MCF 10A (cell line): ENCODE measurements at regions of chr11 and their contacts with region 1.

Region 1: DNA sequence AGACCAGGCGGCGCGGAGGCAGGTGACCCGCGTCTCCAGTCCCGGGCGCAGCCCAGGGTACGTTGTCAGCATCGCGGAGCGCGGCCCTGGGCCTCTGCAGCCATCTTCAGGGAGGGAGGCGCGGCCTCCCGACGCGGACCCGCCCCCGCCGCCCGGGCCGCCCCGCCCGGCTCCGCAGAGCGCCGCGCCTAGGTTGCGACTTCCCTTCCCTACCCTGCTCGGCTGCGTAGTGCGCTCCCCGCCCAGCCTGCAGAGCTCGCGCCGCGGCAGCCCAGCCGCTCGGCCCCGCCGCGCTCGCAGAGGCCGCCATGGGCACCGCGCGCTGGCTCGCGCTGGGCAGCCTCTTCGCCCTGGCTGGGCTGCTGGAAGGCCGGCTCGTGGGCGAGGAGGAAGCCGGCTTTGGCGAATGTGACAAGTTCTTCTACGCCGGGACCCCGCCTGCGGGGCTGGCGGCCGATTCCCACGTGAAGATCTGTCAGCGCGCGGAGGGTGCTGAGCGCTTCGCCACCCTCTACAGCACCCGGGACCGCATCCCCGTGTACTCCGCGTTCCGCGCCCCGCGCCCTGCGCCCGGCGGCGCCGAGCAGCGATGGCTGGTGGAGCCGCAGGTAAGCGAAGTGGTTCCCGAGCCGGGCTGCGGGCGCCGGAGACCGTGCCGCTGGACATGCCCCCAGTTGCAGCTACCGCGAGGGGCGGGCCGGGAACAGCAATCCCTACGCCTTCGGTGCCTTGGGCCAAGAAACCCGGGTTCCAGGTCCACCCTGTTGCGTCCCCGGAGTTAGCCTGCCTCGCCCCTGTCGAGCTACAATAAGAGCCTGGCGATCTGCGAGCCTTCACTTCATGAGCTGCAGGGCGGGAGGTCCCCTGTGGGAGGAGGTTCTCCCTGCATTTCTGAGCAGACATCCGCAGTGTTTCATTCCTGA is at the start of gene ENDOD1:
- DNase-seq: peak; percentile 80
- H3K4me3 Mint-ChIP-seq: peak within 1 kb of the TSS; percentile 85
- H3K27ac Mint-ChIP-seq: peak within 1 kb of the TSS; percentile 64
- H3K4me1 Mint-ChIP-seq: peaks cover 36% of the 10 kb centered on the region
- H3K27me3 Mint-ChIP-seq: no peaks in the 10 kb centered on the region
- CTCF ChIP-seq: no peak
- total RNA-seq, gene ENDOD1: 10.8 and 11.4 TPM in 2 replicates

Region 2: DNA sequence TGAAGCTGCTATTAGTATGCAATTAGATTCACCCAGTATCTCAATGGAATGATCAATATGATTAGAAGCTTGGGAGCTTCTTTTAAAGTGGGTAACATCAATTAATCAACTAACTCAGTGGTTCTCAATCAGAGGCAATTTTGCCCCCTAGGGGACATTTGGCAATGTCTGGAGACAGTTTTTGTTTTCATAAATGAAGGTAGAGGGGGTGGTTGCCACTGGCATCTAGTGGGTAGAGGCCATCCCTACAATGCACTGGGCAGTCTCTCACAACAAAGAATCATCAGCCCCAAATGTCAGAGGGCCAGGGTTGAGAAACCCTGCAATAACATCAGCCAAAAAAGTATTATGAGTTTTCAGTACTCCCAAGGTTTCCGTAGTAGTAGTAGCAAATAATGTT is 327.7 kb before region 1 on chr11:
- CTCF ChIA-PET with region 1: no interaction called
- POLR2A ChIA-PET with region 1: no interaction called
- intact Hi-C with region 1: no loop called
- DNase-seq: peak; percentile 71
- H3K4me3 Mint-ChIP-seq: no peak overlapping the region
- H3K27ac Mint-ChIP-seq: no peak overlapping the region
- H3K4me1 Mint-ChIP-seq: no peaks in the 10 kb centered on the region
- H3K27me3 Mint-ChIP-seq: no peaks in the 10 kb centered on the region
- CTCF ChIP-seq: peak; percentile 58

Region 3: GRCh38 chr11:94834911-94835593 is 254.8 kb before region 1 on chr11:
- CTCF ChIA-PET with region 1: no interaction called
- POLR2A ChIA-PET with region 1: no interaction called
- intact Hi-C with region 1: no loop called
- DNase-seq: peak; percentile 18
- H3K4me3 Mint-ChIP-seq: no peak overlapping the region
- H3K27ac Mint-ChIP-seq: peak overlapping the region; percentile 54
- H3K4me1 Mint-ChIP-seq: peaks cover 15% of the 10 kb centered on the region
- H3K27me3 Mint-ChIP-seq: no peaks in the 10 kb centered on the region
- CTCF ChIP-seq: no peak

Region 4: DNA sequence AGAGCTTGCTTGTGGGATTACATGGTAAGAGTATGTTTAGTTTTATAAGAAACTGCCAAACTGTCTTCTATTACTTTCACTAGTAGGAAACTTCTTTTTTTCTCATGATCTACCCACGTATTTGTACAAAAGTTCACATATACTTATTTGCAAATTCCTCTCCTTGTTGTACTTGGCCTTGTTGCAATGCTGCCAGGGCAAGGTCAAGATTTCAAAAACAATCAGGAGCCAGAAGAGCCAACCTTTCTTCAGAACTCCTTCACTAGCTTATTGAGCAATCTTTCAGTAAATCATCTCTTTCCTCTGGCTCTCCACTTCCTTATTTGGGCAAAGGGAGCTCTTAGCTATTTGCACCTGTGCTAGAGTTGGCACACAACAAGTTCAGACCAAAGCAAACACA is 13.5 kb before region 1 on chr11:
- CTCF ChIA-PET with region 1: interaction called, 50 read pairs
- POLR2A ChIA-PET with region 1: interaction called, 108 read pairs
- intact Hi-C with region 1: no loop called
- DNase-seq: peak; percentile 94
- H3K4me3 Mint-ChIP-seq: peak overlapping the region; percentile 25
- H3K27ac Mint-ChIP-seq: peak overlapping the region; percentile 68
- H3K4me1 Mint-ChIP-seq: peaks cover 39% of the 10 kb centered on the region
- H3K27me3 Mint-ChIP-seq: no peaks in the 10 kb centered on the region
- CTCF ChIP-seq: no peak

Region 5: DNA sequence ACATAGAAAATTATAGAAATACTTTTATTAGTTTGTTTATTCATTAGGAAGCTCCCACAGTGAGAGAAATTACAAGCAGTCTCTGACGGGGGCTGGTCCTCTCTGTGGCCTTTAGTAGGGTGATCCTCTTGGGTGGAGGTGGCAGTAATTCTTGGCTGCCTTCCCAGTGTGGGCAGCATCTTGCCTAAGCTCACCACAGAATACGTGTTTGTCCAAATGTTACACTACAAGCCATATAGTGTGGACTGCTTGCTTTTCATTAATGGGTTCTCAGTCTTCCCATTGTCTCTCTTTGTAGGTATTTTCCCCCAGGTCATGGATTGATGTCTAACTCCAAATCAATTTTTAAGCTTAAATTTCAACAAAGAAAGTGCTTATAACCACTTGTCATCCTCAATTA is 43.1 kb after region 1 on chr11:
- CTCF ChIA-PET with region 1: interaction called, 4 read pairs
- POLR2A ChIA-PET with region 1: interaction called, 19 read pairs
- intact Hi-C with region 1: loop called (anchors 1 kb)
- DNase-seq: peak; percentile 82
- H3K4me3 Mint-ChIP-seq: no peak overlapping the region
- H3K27ac Mint-ChIP-seq: peak overlapping the region; percentile 42
- H3K4me1 Mint-ChIP-seq: peaks cover 25% of the 10 kb centered on the region
- H3K27me3 Mint-ChIP-seq: no peaks in the 10 kb centered on the region
- CTCF ChIP-seq: no peak

Region 6: DNA sequence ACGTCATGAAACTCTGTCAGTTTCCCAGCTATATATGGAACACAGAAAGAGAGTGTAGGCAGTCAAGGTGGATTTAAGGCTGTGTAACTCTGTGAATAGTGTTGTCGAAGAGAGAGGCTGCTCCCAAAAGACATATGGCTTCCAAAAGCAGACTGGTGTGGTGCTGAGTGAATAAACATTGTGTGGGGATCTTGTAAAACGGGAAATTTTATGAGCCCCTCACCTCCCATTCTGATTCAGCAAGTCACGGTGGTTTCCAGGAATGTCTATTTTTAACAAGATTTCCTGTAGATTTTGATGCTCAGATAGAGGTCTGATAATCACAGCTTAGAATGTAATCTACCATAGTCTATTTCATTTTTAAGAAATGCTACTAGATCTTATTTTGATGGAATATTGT is 73.2 kb after region 1 on chr11:
- CTCF ChIA-PET with region 1: no interaction called
- POLR2A ChIA-PET with region 1: no interaction called
- intact Hi-C with region 1: no loop called
- DNase-seq: no peak
- H3K4me3 Mint-ChIP-seq: no peak overlapping the region
- H3K27ac Mint-ChIP-seq: no peak overlapping the region
- H3K4me1 Mint-ChIP-seq: no peaks in the 10 kb centered on the region
- H3K27me3 Mint-ChIP-seq: no peaks in the 10 kb centered on the region
- CTCF ChIP-seq: no peak

Region 7: GRCh38 chr11:95254131-95254704 is 164.3 kb after region 1 on chr11:
- CTCF ChIA-PET with region 1: no interaction called
- POLR2A ChIA-PET with region 1: no interaction called
- intact Hi-C with region 1: no loop called
- DNase-seq: peak; percentile 64
- H3K4me3 Mint-ChIP-seq: no peak overlapping the region
- H3K27ac Mint-ChIP-seq: no peak overlapping the region
- H3K4me1 Mint-ChIP-seq: peaks cover 5% of the 10 kb centered on the region
- H3K27me3 Mint-ChIP-seq: no peaks in the 10 kb centered on the region
- CTCF ChIP-seq: no peak